ENCODE measurements at regions of chr5 and their contacts with region 1.

Region 1: DNA sequence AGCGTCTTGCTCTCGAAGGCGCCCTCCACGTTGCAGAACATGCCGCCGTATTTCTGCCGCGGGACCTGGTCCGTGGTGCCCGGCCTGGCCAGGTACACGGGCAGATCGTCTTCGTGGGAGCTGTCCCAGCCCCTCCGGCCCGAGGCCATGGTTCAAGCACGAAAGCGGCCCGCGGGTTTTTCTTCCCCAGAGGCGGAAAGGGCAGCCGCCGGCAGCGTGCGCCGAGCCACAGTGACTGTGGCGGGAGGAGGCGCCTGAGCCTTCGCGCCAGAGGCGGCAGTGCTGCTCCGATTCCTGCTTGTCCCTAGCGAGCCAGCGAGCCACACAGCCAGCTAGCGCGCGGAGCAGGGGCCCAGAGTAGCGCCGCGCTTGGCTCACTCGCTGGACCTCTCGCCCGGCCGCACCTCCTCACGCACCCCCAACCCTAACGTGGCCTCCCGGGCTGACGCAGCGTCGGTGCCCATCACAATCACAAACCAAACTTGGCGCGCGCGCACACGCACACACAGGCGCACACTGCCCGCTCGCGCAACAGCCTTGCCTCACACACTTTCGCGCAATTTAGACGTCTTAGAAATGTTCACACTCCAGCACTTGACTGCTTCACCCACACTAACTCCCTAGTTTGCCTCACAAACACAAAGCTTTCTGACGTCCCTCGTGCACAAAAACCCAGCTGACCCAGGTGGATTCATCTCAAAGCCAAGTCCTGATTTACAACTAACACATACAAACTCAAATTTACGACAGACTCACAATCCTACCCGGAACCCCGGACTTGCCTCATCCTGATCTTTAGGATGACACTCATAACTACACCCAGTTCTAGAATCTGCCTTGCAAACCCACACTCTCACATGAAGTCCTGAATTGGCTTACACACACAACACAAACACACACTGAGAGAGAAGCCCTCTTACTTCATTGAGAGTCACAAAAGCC is at the start of gene DPYSL3:
- DNase-seq: peak; percentile 61
- ATAC-seq: peak; percentile 84
- H3K4me3 ChIP-seq: peak within 1 kb of the TSS; percentile 80
- H3K27ac ChIP-seq: no peak within 1 kb of the TSS
- H3K4me1 ChIP-seq: peaks cover 22% of the 10 kb centered on the region
- H3K27me3 ChIP-seq: no peaks in the 10 kb centered on the region
- CTCF ChIP-seq: peak; percentile 32; the same call in 1 of the 2 replicates
- total RNA-seq, gene DPYSL3: 19.5 and 20.6 TPM in 2 replicates

Region 2: DNA sequence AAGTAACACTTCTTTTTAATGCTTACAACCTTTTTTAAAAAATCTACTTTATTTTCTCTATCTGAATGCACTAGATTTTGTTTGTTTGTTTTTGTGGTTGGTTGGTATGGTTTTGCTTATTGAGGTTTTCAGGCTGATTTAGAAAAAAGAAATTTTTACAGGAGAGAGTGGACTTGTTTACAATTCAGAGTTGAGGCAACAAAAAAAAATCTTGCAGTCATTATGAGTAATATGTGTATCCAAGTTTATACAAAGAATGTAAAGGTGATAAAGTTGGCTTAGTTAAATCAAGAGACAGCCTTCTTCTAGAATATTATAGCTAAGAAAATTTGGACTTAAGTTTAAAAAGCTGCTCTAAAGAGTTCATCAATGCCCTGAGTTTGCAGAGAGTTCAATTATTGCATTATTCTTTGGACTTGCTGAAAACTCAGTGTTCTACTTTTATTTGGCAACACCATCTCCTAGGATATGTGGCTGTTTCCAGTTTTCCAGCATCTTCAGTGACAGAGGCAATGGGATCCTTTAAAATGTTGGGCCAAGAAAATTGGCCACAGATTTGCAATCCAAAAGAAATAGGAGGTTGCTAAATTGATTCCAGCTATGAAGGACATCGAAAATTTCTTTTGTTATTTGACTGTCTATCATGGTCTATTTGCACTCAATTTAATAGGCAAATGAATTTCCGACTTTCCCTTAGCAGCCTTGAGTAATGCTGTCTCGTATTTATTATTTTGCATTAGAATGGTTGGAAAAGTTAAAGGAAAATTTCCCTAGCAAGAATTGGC is 264.4 kb before region 1 on chr5:
- CTCF ChIA-PET with region 1: no interaction called
- POLR2A ChIA-PET with region 1: no interaction called
- intact Hi-C with region 1: no loop called
- DNase-seq: peak; percentile 57
- ATAC-seq: peak; percentile 56
- H3K4me3 ChIP-seq: no peak overlapping the region
- H3K27ac ChIP-seq: no peak overlapping the region
- H3K4me1 ChIP-seq: peaks cover 16% of the 10 kb centered on the region
- H3K27me3 ChIP-seq: no peaks in the 10 kb centered on the region
- CTCF ChIP-seq: no peak

Region 3: DNA sequence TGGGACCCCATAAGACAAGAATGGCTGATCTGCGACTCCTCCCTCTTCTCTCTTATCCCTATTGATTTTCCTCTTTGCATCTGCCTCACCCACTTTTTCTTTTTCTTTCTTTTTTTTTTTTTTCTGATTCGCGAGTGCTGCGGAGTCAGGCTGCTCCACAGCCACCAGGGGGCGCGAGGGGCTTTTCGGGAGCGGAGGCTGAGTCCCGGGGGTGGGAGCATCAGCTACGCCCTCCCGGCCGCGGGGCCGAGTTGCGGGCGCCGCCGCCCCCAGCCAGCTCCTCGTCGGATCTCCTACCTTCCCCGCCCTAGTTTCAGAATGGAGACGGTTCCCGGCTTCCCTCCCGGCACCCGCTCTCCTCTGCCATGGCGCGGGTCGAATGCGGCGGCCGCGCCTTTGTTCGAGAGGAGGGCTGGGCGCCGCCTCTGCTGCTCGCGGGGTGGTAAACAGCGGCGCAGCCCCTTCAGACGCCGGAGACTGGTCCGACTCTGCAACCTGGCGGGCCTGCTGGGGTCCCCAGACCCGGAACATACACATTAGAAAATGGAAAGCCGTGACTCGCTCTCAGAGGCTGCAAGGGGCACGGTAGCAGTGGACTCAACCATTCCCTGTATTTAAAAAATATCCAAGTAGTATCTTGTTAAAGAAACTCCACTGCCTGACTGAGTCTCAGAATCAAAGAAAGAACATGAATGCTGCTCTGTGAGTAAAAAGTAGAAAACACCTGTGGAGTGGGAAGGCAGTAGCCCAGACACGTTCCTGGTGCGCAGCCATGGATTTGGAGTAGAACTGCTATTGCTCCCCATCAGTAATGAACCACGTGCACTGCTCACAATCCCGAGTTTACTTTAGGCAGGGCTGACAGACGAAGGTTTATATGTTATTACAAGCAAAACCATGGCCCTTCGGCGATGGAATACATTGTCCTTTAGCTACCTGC is 55.8 kb before region 1 on chr5:
- CTCF ChIA-PET with region 1: no interaction called
- POLR2A ChIA-PET with region 1: no interaction called
- intact Hi-C with region 1: loop called (anchors 2 kb)
- DNase-seq: peak; percentile 71
- ATAC-seq: peak; percentile 75
- H3K4me3 ChIP-seq: peak overlapping the region; percentile 87
- H3K27ac ChIP-seq: no peak overlapping the region
- H3K4me1 ChIP-seq: no peaks in the 10 kb centered on the region; the same call in 1 of the 2 replicates
- H3K27me3 ChIP-seq: peaks cover 4% of the 10 kb centered on the region
- CTCF ChIP-seq: peak; percentile 85

Region 4: DNA sequence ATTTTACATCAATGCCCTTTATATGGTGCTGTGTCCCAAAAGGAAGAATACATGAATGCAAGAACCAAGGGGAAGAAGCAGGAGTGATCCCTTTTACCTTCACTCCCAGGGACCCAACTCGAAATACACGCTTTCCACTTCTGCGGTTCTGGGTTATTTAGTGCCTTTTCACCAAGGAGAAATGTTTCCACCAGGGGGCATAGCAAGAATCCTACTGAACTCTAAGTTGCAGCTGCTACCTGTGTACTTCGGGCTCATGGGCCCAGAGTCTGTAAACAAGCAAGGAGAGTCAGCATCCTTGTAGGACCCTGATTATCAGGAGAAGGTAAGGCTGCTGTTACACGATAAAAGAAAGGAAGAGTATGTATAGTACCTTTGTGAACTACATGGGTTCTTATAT is 45.8 kb before region 1 on chr5:
- CTCF ChIA-PET with region 1: no interaction called
- POLR2A ChIA-PET with region 1: no interaction called
- intact Hi-C with region 1: loop called (anchors 1 kb)
- DNase-seq: peak; percentile 57
- ATAC-seq: peak; percentile 67
- H3K4me3 ChIP-seq: no peak overlapping the region
- H3K27ac ChIP-seq: no peak overlapping the region
- H3K4me1 ChIP-seq: no peaks in the 10 kb centered on the region
- H3K27me3 ChIP-seq: no peaks in the 10 kb centered on the region
- CTCF ChIP-seq: peak; percentile 67

Region 5: GRCh38 chr5:147481874-147482705 is 27.9 kb before region 1 on chr5:
- CTCF ChIA-PET with region 1: interaction called, 3 read pairs
- POLR2A ChIA-PET with region 1: no interaction called
- intact Hi-C with region 1: loop called (anchors 2 kb)
- DNase-seq: no peak
- ATAC-seq: no peak
- H3K4me3 ChIP-seq: no peak overlapping the region
- H3K27ac ChIP-seq: no peak overlapping the region
- H3K4me1 ChIP-seq: peaks cover 16% of the 10 kb centered on the region
- H3K27me3 ChIP-seq: no peaks in the 10 kb centered on the region
- CTCF ChIP-seq: no peak

Region 6: DNA sequence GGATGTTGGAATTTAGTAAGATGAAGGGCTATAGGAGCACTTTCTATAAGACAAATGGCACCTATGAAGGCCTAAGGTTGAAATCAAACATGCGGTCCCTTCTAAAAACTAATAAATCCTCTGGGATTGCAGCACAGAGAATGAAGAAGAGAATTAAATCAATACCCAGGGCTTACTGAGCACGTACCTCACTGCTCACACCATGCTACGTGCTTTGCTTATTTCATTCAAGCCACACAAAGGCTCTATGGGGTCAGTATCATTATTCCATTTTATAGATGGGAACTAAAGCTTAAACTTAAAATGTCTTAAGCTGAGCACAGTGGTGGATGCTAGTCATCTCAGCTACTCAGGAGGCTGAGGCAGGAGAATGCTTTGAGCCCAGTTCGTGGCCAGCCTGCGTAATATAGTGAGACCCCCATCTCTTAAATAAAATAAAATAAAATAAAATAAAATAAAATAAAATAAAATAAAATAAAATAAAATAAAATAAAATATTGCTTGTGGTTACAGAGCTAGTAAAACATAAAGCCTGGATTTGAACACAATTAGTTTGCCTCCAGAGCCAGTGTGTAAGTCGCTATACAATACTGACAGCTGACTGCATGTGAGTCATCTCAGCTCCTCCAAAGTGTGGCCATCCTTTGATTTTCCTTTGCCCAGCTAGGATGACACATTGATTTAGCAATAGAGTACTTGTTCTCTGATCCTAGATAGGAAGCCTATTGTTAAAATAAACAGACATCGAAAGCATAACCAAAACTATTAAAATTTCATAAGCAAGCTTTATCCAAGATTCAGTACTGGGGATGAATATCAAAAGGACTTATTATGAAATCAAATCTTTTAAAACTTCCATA is 20.8 kb after region 1 on chr5:
- CTCF ChIA-PET with region 1: no interaction called
- POLR2A ChIA-PET with region 1: no interaction called
- intact Hi-C with region 1: loop called (anchors 2 kb)
- DNase-seq: peak; percentile 78
- ATAC-seq: peak; percentile 74
- H3K4me3 ChIP-seq: peak overlapping the region; percentile 41
- H3K27ac ChIP-seq: peak overlapping the region; percentile 71
- H3K4me1 ChIP-seq: peaks cover 27% of the 10 kb centered on the region
- H3K27me3 ChIP-seq: no peaks in the 10 kb centered on the region
- CTCF ChIP-seq: no peak

Region 7: GRCh38 chr5:147547730-147548129 is 37.7 kb after region 1 on chr5:
- CTCF ChIA-PET with region 1: no interaction called
- POLR2A ChIA-PET with region 1: no interaction called
- intact Hi-C with region 1: no loop called
- DNase-seq: no peak
- ATAC-seq: no peak
- H3K4me3 ChIP-seq: no peak overlapping the region
- H3K27ac ChIP-seq: no peak overlapping the region
- H3K4me1 ChIP-seq: no peaks in the 10 kb centered on the region
- H3K27me3 ChIP-seq: no peaks in the 10 kb centered on the region
- CTCF ChIP-seq: no peak

Region 8: GRCh38 chr5:147685993-147686392 is 176.0 kb after region 1 on chr5:
- CTCF ChIA-PET with region 1: no interaction called
- POLR2A ChIA-PET with region 1: no interaction called
- intact Hi-C with region 1: no loop called
- DNase-seq: peak; percentile 87
- ATAC-seq: peak; percentile 69
- H3K4me3 ChIP-seq: no peak overlapping the region; the same call in 1 of the 2 replicates
- H3K27ac ChIP-seq: peak overlapping the region; percentile 57
- H3K4me1 ChIP-seq: peaks cover 24% of the 10 kb centered on the region
- H3K27me3 ChIP-seq: no peaks in the 10 kb centered on the region
- CTCF ChIP-seq: no peak

Measured in PC-3 (cell line).